ENCODE measurements at regions of chr9 and their contacts with region 1.

Region 1: DNA sequence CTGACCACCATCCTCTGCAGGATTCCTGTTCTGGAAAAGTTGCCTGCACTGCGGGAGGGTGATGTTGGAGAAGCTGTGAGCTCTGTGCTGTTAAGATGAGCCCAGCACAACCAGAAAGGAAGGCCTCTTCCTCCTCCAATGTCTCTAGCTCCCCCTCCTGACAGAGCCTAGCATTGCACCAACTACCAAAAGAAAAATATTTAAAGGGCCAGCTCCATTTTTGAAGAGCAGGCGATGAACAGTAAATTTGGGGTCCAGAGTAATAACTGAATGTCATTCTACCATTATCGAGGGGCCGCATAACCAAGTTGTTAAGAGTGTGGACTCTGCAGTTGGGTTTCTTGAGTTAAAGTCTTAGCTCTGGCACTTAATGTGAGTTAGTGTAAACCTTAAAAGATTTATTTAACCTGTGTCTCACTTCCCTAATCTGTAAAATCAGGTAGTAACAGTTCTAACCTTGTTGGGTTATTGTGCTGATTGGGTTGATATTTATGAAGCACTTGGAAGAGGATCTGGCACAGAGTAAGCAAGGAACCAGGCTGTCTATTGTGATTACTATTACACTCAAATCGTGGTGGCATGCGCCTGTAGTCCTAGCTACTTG is 3.9 kb downstream of the TEX53 start:
- DNase-seq: peak; percentile 59 to 89 (median 82)
- ATAC-seq: peak; percentile 99
- H3K4me3 ChIP-seq: no peak overlapping the region
- H3K4me3 Mint-ChIP-seq: no peak overlapping the region
- H3K27ac ChIP-seq: no peak overlapping the region
- H3K27ac Mint-ChIP-seq: peak overlapping the region; percentile 30
- H3K4me1 ChIP-seq: peaks cover 8% of the 10 kb centered on the region
- H3K4me1 Mint-ChIP-seq: peaks cover 21% of the 10 kb centered on the region
- H3K27me3 ChIP-seq: no peaks in the 10 kb centered on the region
- H3K27me3 Mint-ChIP-seq: no peaks in the 10 kb centered on the region
- CTCF ChIP-seq: peak; percentile 88

Region 2: DNA sequence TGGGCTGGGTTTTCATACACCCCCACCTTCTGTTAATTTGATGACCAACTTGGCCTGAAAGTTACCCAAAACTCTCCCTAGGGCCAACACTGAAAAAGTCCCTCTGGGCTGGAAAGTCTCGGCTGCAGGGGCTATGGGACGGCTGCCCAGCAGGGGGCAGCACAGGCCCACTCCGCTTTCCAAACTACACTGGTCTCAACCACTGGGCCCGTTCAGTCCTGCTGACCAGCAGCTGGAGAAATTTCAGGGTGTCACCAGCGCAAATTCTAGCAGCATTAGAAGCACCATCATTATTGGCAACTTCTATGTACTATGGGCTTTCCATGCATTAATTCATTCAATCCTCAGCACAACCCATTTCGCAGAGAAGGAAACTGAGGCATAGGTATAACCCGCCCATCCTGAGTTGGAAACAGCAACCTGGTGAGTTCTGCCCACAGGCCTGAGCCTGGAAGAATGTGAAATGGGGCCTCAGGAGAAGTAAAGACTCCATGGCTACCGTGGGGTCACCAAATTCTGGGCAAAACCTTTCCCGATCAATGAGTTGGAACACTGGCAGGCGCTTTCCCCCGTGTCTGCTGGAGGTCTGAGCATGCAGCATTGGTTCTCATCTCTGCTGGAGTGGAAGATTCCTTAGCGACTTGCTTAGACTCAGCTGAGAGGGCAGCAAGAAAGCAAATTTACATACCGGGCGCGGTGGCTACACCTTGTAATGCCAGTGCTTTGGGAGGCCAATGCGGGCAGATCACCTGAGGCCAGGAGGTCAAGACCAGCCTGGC is 314.3 kb before region 1 on chr9:
- CTCF ChIA-PET with region 1: interaction called, 5 read pairs
- POLR2A ChIA-PET with region 1: interaction called, 3 read pairs
- intact Hi-C with region 1: loop called in 1 of 2 experiments (anchors 1 kb)
- DNase-seq: peak; percentile 23 to 75 (median 44)
- ATAC-seq: peak; percentile 67
- H3K4me3 ChIP-seq: no peak overlapping the region
- H3K4me3 Mint-ChIP-seq: no peak overlapping the region
- H3K27ac ChIP-seq: peak overlapping the region in 1 of 2 donors; percentile 40
- H3K27ac Mint-ChIP-seq: peak overlapping the region; percentile 62
- H3K4me1 ChIP-seq: peaks cover 11% of the 10 kb centered on the region
- H3K4me1 Mint-ChIP-seq: peaks cover 16% of the 10 kb centered on the region
- H3K27me3 ChIP-seq: no peaks in the 10 kb centered on the region
- H3K27me3 Mint-ChIP-seq: no peaks in the 10 kb centered on the region
- CTCF ChIP-seq: peak; percentile 89

Region 3: DNA sequence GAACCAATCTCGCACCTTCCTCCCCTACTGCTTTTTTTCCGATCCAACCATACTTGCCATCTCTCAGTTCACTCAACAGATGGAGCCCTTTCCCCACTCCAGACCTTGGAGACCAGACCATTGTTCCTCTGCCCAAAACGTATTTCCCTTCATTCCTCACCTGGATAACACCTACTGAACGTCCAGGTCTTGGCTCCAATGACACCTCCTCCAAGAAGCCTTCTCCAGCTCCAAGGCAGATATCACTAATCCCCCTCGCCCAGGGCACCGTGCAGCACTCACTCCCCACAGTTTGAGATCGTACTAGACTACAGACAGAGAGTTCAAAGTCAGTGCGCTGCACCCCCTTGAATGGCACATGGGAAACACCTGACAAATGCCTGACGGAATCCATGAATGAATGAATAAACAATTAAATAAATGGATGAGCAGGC is 218.8 kb before region 1 on chr9:
- CTCF ChIA-PET with region 1: interaction called, 6 read pairs
- POLR2A ChIA-PET with region 1: interaction called, 9 read pairs
- intact Hi-C with region 1: loop called in 1 of 2 experiments (anchors 1 kb)
- DNase-seq: peak in 4 of 14 experiments; percentile 16 to 47 (median 31)
- ATAC-seq: no peak
- H3K4me3 ChIP-seq: no peak overlapping the region
- H3K4me3 Mint-ChIP-seq: no peak overlapping the region
- H3K27ac ChIP-seq: no peak overlapping the region
- H3K27ac Mint-ChIP-seq: no peak overlapping the region
- H3K4me1 ChIP-seq: peaks cover 9% of the 10 kb centered on the region
- H3K4me1 Mint-ChIP-seq: peaks cover 5% of the 10 kb centered on the region
- H3K27me3 ChIP-seq: no peaks in the 10 kb centered on the region
- H3K27me3 Mint-ChIP-seq: no peaks in the 10 kb centered on the region
- CTCF ChIP-seq: peak; percentile 45

Region 4: GRCh38 chr9:114487607-114488300 is 165.9 kb before region 1 on chr9:
- CTCF ChIA-PET with region 1: interaction called, 6 read pairs
- POLR2A ChIA-PET with region 1: no interaction called
- intact Hi-C with region 1: loop called (anchors 1 kb)
- DNase-seq: peak; percentile 32 to 86 (median 48)
- ATAC-seq: peak; percentile 90
- H3K4me3 ChIP-seq: no peak overlapping the region
- H3K4me3 Mint-ChIP-seq: no peak overlapping the region
- H3K27ac ChIP-seq: no peak overlapping the region
- H3K27ac Mint-ChIP-seq: no peak overlapping the region
- H3K4me1 ChIP-seq: peaks cover 22% of the 10 kb centered on the region
- H3K4me1 Mint-ChIP-seq: peaks cover 11% of the 10 kb centered on the region
- H3K27me3 ChIP-seq: no peaks in the 10 kb centered on the region
- H3K27me3 Mint-ChIP-seq: no peaks in the 10 kb centered on the region
- CTCF ChIP-seq: peak; percentile 85

Region 5: GRCh38 chr9:114538241-114538640 is 115.4 kb before region 1 on chr9:
- CTCF ChIA-PET with region 1: interaction called, 8 read pairs
- POLR2A ChIA-PET with region 1: interaction called, 7 read pairs
- intact Hi-C with region 1: loop called in 1 of 2 experiments (anchors 5 kb)
- DNase-seq: peak in 12 of 14 experiments; percentile 4 to 64 (median 22)
- ATAC-seq: peak; percentile 95
- H3K4me3 ChIP-seq: no peak overlapping the region
- H3K4me3 Mint-ChIP-seq: no peak overlapping the region
- H3K27ac ChIP-seq: no peak overlapping the region
- H3K27ac Mint-ChIP-seq: no peak overlapping the region
- H3K4me1 ChIP-seq: peaks cover 2% of the 10 kb centered on the region
- H3K4me1 Mint-ChIP-seq: peaks cover 13% of the 10 kb centered on the region
- H3K27me3 ChIP-seq: no peaks in the 10 kb centered on the region
- H3K27me3 Mint-ChIP-seq: no peaks in the 10 kb centered on the region
- CTCF ChIP-seq: peak; percentile 33

Region 6: GRCh38 chr9:114611516-114612271 is 42.0 kb before region 1 on chr9:
- CTCF ChIA-PET with region 1: interaction called, 10 read pairs
- POLR2A ChIA-PET with region 1: interaction called, 6 read pairs
- intact Hi-C with region 1: loop called (anchors 5 kb)
- DNase-seq: peak in 13 of 14 experiments; percentile 19 to 78 (median 50)
- ATAC-seq: peak; percentile 70
- H3K4me3 ChIP-seq: peak overlapping the region; percentile 90
- H3K4me3 Mint-ChIP-seq: peak overlapping the region; percentile 97
- H3K27ac ChIP-seq: peak overlapping the region; percentile 68 to 78
- H3K27ac Mint-ChIP-seq: peak overlapping the region; percentile 92
- H3K4me1 ChIP-seq: peaks cover 43% of the 10 kb centered on the region
- H3K4me1 Mint-ChIP-seq: peaks cover 48% of the 10 kb centered on the region
- H3K27me3 ChIP-seq: no peaks in the 10 kb centered on the region
- H3K27me3 Mint-ChIP-seq: no peaks in the 10 kb centered on the region
- CTCF ChIP-seq: no peak

Region 7: DNA sequence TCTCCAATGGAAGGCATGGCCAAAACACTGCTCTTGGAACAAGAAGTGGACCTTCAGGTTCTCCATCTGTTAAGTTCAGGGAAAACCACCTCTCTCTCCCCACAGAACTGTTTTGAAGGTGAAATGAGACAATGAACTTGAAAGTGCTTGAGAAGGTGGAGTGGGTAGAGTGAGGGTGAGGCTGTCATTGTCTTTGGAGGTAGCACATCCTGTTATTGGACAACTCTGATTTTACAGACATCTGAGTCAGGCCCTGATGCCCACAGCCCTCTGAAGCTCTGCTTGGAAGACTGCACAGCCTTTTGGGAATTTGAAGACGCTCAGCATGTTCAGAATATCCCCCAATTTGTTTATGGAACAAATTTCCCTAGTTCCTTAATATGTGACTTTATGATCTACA is 56.0 kb after region 1 on chr9:
- CTCF ChIA-PET with region 1: no interaction called
- POLR2A ChIA-PET with region 1: no interaction called
- intact Hi-C with region 1: no loop called
- DNase-seq: peak in 2 of 14 experiments; percentile 13 to 15
- ATAC-seq: no peak
- H3K4me3 ChIP-seq: no peak overlapping the region
- H3K4me3 Mint-ChIP-seq: no peak overlapping the region
- H3K27ac ChIP-seq: no peak overlapping the region
- H3K27ac Mint-ChIP-seq: no peak overlapping the region
- H3K4me1 ChIP-seq: peaks cover 8% of the 10 kb centered on the region
- H3K4me1 Mint-ChIP-seq: no peaks in the 10 kb centered on the region
- H3K27me3 ChIP-seq: no peaks in the 10 kb centered on the region
- H3K27me3 Mint-ChIP-seq: no peaks in the 10 kb centered on the region
- CTCF ChIP-seq: no peak